GM10248 (cell line): ENCODE measurements at regions of chr1 and their contacts with region 1.

Region 1: GRCh38 chr1:156728597-156729462 is at the start of gene ISG20L2:
- DNase-seq: peak; percentile 94
- CTCF ChIP-seq: no peak

Region 2: GRCh38 chr1:156641761-156642264 is 87.0 kb before region 1 on chr1 and contains the start of gene BCAN:
- CTCF ChIA-PET with region 1: interaction called, 11 read pairs
- POLR2A ChIA-PET with region 1: no interaction called
- DNase-seq: peak; percentile 66
- CTCF ChIP-seq: peak; percentile 8

Region 3: DNA sequence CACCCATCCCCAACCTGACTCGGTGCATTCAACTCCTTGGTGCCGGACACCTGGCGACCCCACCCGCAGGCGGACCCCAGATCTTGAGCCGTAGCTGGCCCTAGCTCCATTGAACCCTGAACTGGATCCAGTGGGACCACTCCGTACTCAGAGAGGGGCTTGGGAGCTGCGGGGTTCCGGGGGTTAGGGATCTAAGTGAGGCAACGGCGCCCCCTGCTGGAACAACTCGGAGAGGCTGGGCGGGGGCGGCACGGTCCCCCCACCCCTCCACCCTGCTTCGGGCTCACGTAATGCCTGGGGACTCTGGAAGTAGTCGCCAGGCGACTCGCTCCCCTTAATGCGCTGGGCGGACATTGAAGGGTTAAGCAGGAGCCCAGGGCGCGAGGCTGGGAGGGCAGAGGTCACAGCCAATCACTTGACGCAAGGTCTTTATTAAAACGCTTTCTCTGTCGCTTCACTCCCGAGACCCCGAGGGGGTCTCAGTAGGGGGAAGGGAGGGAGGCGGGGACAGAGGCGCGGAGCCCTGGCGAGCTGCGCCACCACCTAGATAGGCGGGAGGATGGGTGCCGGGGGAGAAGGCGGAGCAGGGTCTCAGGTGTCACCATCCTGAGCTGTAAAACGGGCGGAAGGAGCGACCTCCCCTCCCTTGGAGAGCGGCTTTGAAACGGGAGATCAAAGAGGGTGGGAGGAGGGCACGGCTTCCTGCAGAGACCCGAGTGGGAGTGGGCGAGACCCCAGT is 22.7 kb before region 1 on chr1:
- CTCF ChIA-PET with region 1: interaction called, 117 read pairs
- POLR2A ChIA-PET with region 1: interaction called, 4 read pairs
- DNase-seq: peak; percentile 88
- CTCF ChIP-seq: peak; percentile 67

Region 4: GRCh38 chr1:156767101-156767878 is 38.5 kb after region 1 on chr1 and contains the start of gene PRCC:
- CTCF ChIA-PET with region 1: interaction called, 94 read pairs
- POLR2A ChIA-PET with region 1: no interaction called
- DNase-seq: peak; percentile 92
- CTCF ChIP-seq: no peak

Region 5: GRCh38 chr1:156804572-156805243 is 75.9 kb after region 1 on chr1:
- CTCF ChIA-PET with region 1: interaction called, 16 read pairs
- POLR2A ChIA-PET with region 1: no interaction called
- DNase-seq: no peak
- CTCF ChIP-seq: no peak

Region 6: DNA sequence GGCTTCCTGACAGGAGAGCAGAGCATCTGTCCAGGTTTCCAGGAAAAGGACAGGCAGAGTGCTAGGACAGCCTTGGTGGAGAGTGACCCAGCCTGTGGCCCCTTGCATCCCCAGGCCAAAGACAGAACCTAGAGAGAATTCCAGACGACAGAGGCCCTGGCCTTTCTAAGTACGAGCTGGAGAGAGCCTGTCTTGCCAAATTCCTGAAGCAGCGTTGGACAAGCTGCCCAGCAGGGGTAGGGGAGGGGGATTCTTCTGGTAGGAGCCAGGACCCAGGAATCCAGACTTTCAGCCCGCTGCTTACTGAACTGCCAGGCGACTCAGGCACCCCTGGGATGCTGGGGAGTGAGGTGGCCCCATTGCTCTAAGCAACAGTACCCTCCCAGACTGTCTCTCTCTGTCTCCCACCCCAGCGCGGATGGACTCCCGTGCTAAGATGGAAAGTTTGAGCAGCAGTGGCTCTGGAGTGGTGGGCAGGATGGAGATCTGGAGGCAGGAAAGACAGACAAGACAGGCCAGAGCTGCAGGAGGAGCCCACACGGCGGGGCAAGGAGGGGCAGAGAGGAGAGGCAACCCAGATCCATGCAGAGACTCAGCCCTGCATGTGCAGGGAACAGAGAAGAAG is 155.8 kb after region 1 on chr1:
- CTCF ChIA-PET with region 1: interaction called, 65 read pairs
- POLR2A ChIA-PET with region 1: no interaction called
- DNase-seq: no peak
- CTCF ChIP-seq: no peak